Prostate gland (tissue), 2 donors: ENCODE measurements at regions of chr14 and their contacts with region 1.

Region 1: GRCh38 chr14:39102969-39103957 is at the start of gene SEC23A:
- DNase-seq: peak; percentile 86
- H3K4me3 ChIP-seq: peak within 1 kb of the TSS; percentile 75 to 96
- H3K27ac ChIP-seq: peak within 1 kb of the TSS; percentile 97 to 98
- H3K4me1 ChIP-seq: no peaks in the 10 kb centered on the region
- H3K27me3 ChIP-seq: no peaks in the 10 kb centered on the region
- CTCF ChIP-seq: no peak
- POLR2A ChIP-seq: peak; percentile 87
- total RNA-seq, gene SEC23A: 54.7 to 102 TPM

Region 2: GRCh38 chr14:39174560-39175444 is 71.5 kb after region 1 on chr14 and contains the start of gene PNN:
- intact Hi-C with region 1: loop called (anchors 5 kb)
- DNase-seq: peak; percentile 98
- H3K4me3 ChIP-seq: peak within 1 kb of the TSS; percentile 76 to 83
- H3K27ac ChIP-seq: peak within 1 kb of the TSS; percentile 88 to 93
- H3K4me1 ChIP-seq: no peaks in the 10 kb centered on the region
- H3K27me3 ChIP-seq: no peaks in the 10 kb centered on the region
- CTCF ChIP-seq: peak in 3 of 4 experiments; percentile 4 to 32 (median 22)
- POLR2A ChIP-seq: peak; percentile 92
- total RNA-seq, gene PNN: 29.8 to 32.7 TPM

Region 3: DNA sequence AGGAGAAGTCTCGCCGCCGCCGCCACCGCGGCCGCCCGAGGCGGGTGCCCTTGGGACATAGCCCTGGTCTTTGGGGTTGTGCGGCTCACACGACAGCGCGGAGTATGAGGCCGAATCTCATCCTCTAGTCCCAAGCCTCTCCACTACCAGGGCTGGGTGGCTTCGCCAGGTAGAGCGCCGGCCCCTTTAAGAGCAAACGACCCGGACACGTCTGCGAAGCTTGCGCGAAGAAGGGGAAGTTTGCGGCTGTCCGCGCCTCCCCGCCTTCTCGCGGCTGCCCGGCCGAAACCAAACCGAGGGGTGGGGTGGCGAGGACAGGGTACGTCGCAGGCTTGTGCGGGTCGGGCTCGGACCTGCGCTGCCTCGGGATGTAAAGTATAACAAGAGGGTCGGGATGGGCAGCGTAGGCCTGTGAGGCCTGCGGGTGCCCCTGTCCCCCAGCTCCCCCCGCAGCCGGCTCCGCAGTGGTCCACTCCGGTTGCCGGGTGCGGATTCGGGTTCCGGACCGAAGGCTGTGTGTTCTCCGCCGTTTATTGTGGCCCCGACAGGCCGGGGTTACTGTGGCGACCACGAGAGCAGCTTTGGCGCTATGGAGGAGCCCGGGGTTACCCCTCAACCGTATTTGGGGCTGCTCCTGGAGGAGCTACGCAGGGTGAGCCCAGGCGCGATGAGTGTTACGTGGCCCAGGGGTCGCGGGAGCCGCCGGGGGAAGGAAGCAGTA is 163.8 kb after region 1 on chr14:
- intact Hi-C with region 1: loop called (anchors 5 kb)
- DNase-seq: peak; percentile 68
- H3K4me3 ChIP-seq: peak overlapping the region; percentile 62 to 81
- H3K27ac ChIP-seq: peak overlapping the region; percentile 94 to 95
- H3K4me1 ChIP-seq: peaks cover 2% of the 10 kb centered on the region
- H3K27me3 ChIP-seq: no peaks in the 10 kb centered on the region
- CTCF ChIP-seq: peak in 1 of 4 experiments; percentile 3
- POLR2A ChIP-seq: peak; percentile 47

Region 4: GRCh38 chr14:39368261-39368959 is 265.1 kb after region 1 on chr14:
- intact Hi-C with region 1: loop called (anchors 2 kb)
- DNase-seq: peak; percentile 26
- H3K4me3 ChIP-seq: no peak overlapping the region
- H3K27ac ChIP-seq: no peak overlapping the region
- H3K4me1 ChIP-seq: no peaks in the 10 kb centered on the region
- H3K27me3 ChIP-seq: no peaks in the 10 kb centered on the region
- CTCF ChIP-seq: peak in 2 of 4 experiments; percentile 43 to 45
- POLR2A ChIP-seq: no peak

Region 5: DNA sequence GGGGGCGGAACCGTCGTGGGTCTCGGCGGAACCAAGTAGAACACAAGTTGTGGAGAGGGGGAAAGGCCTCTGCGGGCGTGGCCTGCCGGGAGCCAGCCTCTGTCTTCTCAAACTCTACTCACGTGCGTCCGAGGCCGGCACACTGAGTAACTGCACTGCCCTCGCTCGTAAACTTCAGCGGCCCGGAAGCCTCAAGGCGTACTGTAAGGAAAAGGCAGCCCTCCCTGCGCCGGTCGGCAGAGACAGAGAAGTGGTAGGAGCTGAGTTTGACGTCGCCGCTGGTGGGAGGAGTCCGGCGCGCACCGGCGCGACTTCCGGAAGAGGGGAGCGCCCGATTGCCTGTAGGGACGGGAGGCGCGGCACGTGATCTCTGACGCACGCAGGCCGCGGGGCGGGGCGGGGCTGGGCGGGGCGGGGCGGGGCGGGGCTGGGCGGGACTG is 328.9 kb after region 1 on chr14 and contains the start of gene FBXO33:
- intact Hi-C with region 1: loop called (anchors 5 kb)
- DNase-seq: peak; percentile 97
- H3K4me3 ChIP-seq: peak within 1 kb of the TSS; percentile 88 to 96
- H3K27ac ChIP-seq: peak within 1 kb of the TSS; percentile 98 to 99
- H3K4me1 ChIP-seq: no peaks in the 10 kb centered on the region
- H3K27me3 ChIP-seq: no peaks in the 10 kb centered on the region
- CTCF ChIP-seq: peak in 1 of 4 experiments; percentile 6
- POLR2A ChIP-seq: no peak
- total RNA-seq, gene FBXO33: 15.1 to 17.1 TPM

Region 6: GRCh38 chr14:39768589-39768988 is 665.3 kb after region 1 on chr14:
- intact Hi-C with region 1: no loop called
- DNase-seq: no peak
- H3K4me3 ChIP-seq: no peak overlapping the region
- H3K27ac ChIP-seq: no peak overlapping the region
- H3K4me1 ChIP-seq: no peaks in the 10 kb centered on the region
- H3K27me3 ChIP-seq: no peaks in the 10 kb centered on the region
- CTCF ChIP-seq: no peak
- POLR2A ChIP-seq: no peak